ENCODE measurements at regions of chr19 and their contacts with region 1.

Region 1: DNA sequence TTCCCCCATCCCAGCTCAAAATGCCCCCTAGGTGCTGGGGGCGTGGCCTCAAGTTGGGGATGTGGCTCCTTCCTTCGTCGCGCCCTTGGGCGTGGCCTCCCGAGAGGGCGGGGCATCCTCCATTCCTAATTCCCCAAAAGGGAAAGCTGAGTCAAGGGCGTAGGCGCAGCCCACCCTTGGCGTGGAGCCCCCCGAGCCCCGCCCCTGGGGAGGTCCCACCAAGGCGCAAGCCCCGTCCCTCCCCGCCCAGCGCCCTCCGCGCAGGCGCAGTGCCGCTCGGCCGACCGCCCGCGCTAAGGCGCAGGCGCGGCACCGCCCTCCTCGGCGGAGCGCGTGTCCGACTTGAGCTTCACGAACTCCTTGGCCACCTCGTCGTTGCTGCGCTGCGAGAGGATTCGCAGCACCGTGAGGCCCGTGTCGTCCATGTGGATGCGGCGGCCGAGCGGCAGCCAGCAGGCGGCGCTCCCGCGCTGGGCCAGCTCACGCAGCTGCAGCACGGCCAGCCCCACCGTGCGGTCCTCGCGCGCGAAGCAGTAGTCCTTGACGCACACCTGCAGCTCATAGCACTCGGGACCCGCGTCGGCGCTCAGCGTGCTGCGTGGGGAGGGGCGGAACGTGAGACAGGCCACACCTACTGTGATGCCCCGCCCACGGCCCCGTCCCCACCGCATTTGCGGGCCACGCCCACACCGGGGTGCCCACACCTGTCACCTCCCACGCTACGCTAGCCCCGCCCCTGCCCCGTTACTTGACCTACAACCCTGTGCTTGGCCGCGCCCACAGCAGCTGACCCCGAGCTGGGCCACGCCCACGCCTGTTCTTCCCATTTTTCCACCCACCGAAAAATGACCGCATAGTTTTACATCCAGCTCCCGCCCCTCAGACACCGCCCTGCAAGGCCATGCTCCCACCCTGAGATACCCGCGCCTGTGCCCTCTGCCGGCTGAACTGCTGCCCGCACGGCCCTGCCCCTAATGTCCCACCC is 50.6 kb downstream of the COLGALT1 start:
- DNase-seq: peak; percentile 95
- ATAC-seq: peak; percentile 72
- H3K4me3 Mint-ChIP-seq: peak overlapping the region; percentile 75
- H3K27ac Mint-ChIP-seq: peak overlapping the region; percentile 94
- H3K4me1 Mint-ChIP-seq: peaks cover 22% of the 10 kb centered on the region
- H3K27me3 Mint-ChIP-seq: peaks cover 19% of the 10 kb centered on the region
- CTCF ChIP-seq: peak; percentile 50; the same call in 1 of the 2 replicates

Region 2: GRCh38 chr19:17405250-17406038 is 200.6 kb before region 1 on chr19 and contains the start of gene BST2:
- CTCF ChIA-PET with region 1: interaction called, 13 read pairs
- POLR2A ChIA-PET with region 1: no interaction called
- DNase-seq: no peak
- ATAC-seq: peak; percentile 44
- H3K4me3 Mint-ChIP-seq: peak within 1 kb of the TSS; percentile 74
- H3K27ac Mint-ChIP-seq: peak within 1 kb of the TSS; percentile 87
- H3K4me1 Mint-ChIP-seq: peaks cover 32% of the 10 kb centered on the region
- H3K27me3 Mint-ChIP-seq: no peaks in the 10 kb centered on the region
- CTCF ChIP-seq: no peak
- total RNA-seq, gene BST2: 22.8 to 67.7 TPM (median 61.1 TPM) in 3 replicates

Region 3: DNA sequence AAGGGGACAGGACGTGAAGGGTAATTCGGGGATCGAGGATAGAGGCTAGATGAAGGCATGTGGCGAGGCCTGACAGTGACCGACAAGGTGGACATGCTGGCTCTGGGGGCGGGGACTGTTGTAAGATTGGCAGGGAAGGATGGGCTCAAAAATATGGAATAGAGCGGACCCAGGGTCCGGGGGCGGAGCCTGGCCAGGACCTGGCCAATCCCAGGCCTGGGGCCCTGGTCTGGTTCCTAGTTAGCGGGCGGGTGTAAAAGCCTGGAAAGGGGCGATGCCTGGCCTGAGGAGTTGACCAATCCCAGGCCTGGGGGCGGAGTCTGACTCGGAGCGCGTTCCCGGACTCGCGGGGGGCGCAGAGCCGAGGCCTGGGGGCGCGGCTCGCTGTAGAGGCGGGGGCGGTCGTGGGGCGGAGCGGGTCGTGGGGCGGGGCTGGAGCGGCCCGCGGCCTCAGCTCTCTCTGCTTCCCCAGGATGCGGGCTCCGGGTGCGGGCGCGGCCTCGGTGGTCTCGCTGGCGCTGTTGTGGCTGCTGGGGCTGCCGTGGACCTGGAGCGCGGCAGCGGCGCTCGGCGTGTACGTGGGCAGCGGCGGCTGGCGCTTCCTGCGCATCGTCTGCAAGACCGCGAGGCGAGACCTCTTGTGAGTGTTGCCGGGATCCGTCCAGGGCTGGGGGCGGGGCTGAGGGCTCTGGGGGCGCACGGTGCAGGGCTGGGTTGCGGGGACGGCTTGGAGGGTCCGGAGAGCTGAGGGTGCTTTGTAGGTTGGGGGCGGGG is 135.8 kb before region 1 on chr19 and contains the start of gene SLC27A1:
- CTCF ChIA-PET with region 1: interaction called, 17 read pairs
- POLR2A ChIA-PET with region 1: no interaction called
- DNase-seq: peak; percentile 99
- ATAC-seq: peak; percentile 91
- H3K4me3 Mint-ChIP-seq: peak within 1 kb of the TSS; percentile 93
- H3K27ac Mint-ChIP-seq: peak within 1 kb of the TSS; percentile 98
- H3K4me1 Mint-ChIP-seq: peaks cover 19% of the 10 kb centered on the region
- H3K27me3 Mint-ChIP-seq: peaks cover 49% of the 10 kb centered on the region
- CTCF ChIP-seq: no peak
- total RNA-seq, gene SLC27A1: 8.6 to 12.1 TPM (median 10.1 TPM) in 3 replicates

Region 4: DNA sequence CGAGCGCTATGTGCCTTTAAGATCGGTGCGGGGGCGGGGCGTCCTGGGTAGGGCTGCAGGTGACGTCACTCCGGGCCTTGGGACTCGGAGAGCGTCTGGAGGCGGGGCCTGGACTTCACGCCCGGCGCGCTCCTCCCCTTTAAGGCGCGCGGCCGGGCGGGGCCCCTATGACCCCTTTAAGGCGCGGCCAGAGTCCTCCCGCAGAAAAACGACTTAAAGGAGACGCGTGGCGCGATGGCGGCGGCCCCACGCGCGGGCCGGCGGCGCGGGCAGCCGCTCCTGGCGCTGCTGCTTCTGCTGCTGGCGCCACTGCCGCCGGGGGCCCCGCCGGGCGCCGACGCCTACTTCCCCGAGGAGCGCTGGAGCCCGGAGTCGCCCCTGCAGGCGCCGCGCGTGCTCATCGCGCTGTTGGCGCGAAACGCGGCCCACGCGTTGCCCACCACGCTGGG is 50.5 kb before region 1 on chr19 and contains the start of gene COLGALT1:
- CTCF ChIA-PET with region 1: interaction called, 13 read pairs
- POLR2A ChIA-PET with region 1: no interaction called
- DNase-seq: peak; percentile 99
- ATAC-seq: peak; percentile 96
- H3K4me3 Mint-ChIP-seq: peak within 1 kb of the TSS; percentile 69
- H3K27ac Mint-ChIP-seq: no peak within 1 kb of the TSS
- H3K4me1 Mint-ChIP-seq: peaks cover 17% of the 10 kb centered on the region
- H3K27me3 Mint-ChIP-seq: no peaks in the 10 kb centered on the region; the same call in 1 of the 2 replicates
- CTCF ChIP-seq: no peak
- total RNA-seq, gene COLGALT1: 54.0 to 71.7 TPM (median 67.1 TPM) in 3 replicates

Region 5: DNA sequence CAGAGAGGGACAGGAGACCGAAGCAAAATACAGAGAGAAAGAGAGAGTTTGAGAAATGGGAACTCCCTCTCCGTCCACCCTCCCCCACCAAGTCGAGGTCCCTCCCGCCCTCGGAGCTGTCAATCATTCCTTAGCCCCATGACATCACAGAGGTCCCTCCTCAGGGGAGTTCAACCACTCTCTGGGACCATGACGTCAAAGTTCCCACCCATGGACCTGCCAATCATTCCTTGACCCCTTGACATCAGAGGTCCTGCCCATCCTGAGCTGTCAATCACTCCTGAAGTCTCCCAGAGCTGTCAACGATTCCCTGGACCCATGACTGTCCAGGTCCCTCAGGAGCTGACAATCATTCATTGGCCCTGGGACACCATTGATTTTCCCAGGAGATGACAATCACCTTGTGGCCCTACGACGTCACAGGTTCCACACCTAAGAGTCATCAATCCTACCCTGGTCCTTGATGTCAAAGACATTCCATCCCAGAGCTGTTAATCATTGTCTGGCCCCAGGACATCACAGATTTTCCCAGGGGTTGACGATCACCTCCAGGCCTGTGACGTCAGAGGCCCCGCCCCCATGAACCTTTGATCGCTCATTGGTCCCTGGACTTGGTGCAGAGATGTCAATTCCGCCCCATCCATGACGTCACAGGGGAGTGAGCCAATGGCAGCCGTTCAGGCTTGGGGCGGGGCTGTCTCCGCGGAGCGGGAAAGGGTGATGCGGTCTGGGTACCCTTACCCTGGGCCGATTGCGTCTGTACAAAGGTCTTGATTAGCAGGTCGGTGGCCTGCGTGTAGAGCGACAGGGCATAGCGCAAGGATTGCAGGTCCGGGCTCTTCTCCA is 11.1 kb after region 1 on chr19:
- CTCF ChIA-PET with region 1: interaction called, 36 read pairs
- POLR2A ChIA-PET with region 1: no interaction called
- DNase-seq: peak; percentile 81
- ATAC-seq: peak; percentile 89
- H3K4me3 Mint-ChIP-seq: 0 out of 2 replicates have a peak overlapping the region, but pooled peaks have one; percentile 25
- H3K27ac Mint-ChIP-seq: peak overlapping the region; percentile 85
- H3K4me1 Mint-ChIP-seq: peaks cover 9% of the 10 kb centered on the region
- H3K27me3 Mint-ChIP-seq: no peaks in the 10 kb centered on the region
- CTCF ChIP-seq: no peak

Region 6: GRCh38 chr19:17632577-17632976 is 26.5 kb after region 1 on chr19:
- CTCF ChIA-PET with region 1: no interaction called
- POLR2A ChIA-PET with region 1: no interaction called
- DNase-seq: no peak
- ATAC-seq: no peak
- H3K4me3 Mint-ChIP-seq: no peak overlapping the region
- H3K27ac Mint-ChIP-seq: no peak overlapping the region
- H3K4me1 Mint-ChIP-seq: no peaks in the 10 kb centered on the region
- H3K27me3 Mint-ChIP-seq: no peaks in the 10 kb centered on the region
- CTCF ChIP-seq: no peak

Region 7: GRCh38 chr19:17703824-17704463 is 97.9 kb after region 1 on chr19:
- CTCF ChIA-PET with region 1: interaction called, 10 read pairs
- POLR2A ChIA-PET with region 1: interaction called, 4 read pairs
- DNase-seq: peak; percentile 89
- ATAC-seq: peak; percentile 83
- H3K4me3 Mint-ChIP-seq: no peak overlapping the region
- H3K27ac Mint-ChIP-seq: no peak overlapping the region
- H3K4me1 Mint-ChIP-seq: peaks cover 4% of the 10 kb centered on the region; the same call in 1 of the 2 replicates
- H3K27me3 Mint-ChIP-seq: peaks cover 30% of the 10 kb centered on the region
- CTCF ChIP-seq: peak; percentile 83

Region 8: GRCh38 chr19:17859533-17860330 is 253.7 kb after region 1 on chr19 and contains the start of gene RPL18A:
- CTCF ChIA-PET with region 1: interaction called, 15 read pairs
- POLR2A ChIA-PET with region 1: no interaction called
- DNase-seq: peak; percentile 99
- ATAC-seq: peak; percentile 92
- H3K4me3 Mint-ChIP-seq: peak within 1 kb of the TSS; percentile 99
- H3K27ac Mint-ChIP-seq: peak within 1 kb of the TSS; percentile 97
- H3K4me1 Mint-ChIP-seq: peaks cover 21% of the 10 kb centered on the region
- H3K27me3 Mint-ChIP-seq: peaks cover 5% of the 10 kb centered on the region
- CTCF ChIP-seq: no peak
- total RNA-seq, gene RPL18A: 2,950 to 3,448 TPM (median 3,445 TPM) in 3 replicates